ENCODE measurements at regions of chr22 and their contacts with region 1.

Region 1: DNA sequence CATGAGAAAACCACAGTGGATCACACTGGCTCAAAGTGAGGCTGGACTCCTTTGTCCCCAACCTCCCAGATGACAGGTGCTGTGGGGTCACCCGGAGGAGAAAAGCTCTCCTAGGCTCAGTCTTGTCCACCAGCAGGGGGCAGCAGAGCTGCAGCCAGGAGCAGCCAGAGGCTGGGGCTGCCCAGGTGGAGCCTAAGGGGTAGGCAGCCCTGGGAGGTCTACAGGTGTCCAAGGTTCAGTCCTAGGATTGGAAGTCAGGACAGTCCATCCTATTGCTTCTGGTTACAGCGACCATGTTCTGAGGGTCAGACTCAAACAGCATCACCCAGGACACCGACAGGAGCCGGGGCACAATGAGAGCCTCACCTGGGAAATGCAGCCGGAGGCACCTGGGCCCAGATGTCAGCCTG is 77.6 kb upstream of the IGLL5 start:
- DNase-seq: peak; percentile 18 to 46
- ATAC-seq: peak; percentile 85 to 93; a peak in 5 of 6 replicates
- H3K4me3 ChIP-seq: no peak overlapping the region
- H3K27ac ChIP-seq: no peak overlapping the region
- H3K4me1 ChIP-seq: no peaks in the 10 kb centered on the region
- CTCF ChIP-seq: peak; percentile 58
- EP300 ChIP-seq: no peak
- POLR2A ChIP-seq: no peak
- RAD21 ChIP-seq: peak; percentile 45 to 51

Region 2: GRCh38 chr22:22799561-22799960 is 10.5 kb before region 1 on chr22:
- CTCF ChIA-PET with region 1: interaction called, 12 read pairs
- POLR2A ChIA-PET with region 1: no interaction called
- DNase-seq: no peak
- ATAC-seq: no peak
- H3K4me3 ChIP-seq: no peak overlapping the region
- H3K27ac ChIP-seq: no peak overlapping the region
- H3K4me1 ChIP-seq: no peaks in the 10 kb centered on the region
- CTCF ChIP-seq: no peak
- EP300 ChIP-seq: no peak
- POLR2A ChIP-seq: no peak
- RAD21 ChIP-seq: no peak

Measured in A549 (cell line).